Posterior cingulate gyrus (tissue), 11 donors: ENCODE measurements at regions of chr17 and their contacts with region 1.

Region 1: DNA sequence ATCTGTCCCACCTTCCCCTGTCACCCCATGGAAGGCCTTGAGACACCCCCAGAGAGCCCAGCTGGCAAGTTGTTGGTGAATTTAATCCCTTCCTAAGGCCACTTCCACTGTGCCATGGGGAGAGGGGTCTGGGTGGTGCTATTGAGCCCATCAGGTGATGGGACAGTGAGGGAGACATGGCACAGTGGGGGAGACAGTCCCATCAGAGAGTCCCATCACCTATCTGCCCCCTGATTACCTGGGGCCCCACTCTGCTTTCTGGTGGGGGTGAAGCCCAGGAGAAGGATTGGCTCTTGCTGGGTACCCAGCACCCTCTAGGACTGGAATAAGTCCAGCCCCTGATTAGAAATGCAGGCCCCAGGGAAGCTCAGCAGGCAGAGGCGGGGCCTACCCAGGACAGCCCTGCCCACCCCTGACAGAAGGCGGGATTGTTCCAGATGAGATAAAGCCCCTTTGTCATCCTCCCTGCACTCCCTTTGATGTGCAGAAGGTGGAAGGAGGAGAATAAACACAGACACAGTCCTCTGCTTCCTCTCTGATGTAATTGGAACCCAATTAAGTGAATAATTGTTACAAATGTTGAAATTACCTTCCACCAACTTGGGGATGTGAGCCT is 18.9 kb downstream of the TMEM132E start:
- DNase-seq: peak in 8 of 10 donors; percentile 53 to 95 (median 68)

Region 2: DNA sequence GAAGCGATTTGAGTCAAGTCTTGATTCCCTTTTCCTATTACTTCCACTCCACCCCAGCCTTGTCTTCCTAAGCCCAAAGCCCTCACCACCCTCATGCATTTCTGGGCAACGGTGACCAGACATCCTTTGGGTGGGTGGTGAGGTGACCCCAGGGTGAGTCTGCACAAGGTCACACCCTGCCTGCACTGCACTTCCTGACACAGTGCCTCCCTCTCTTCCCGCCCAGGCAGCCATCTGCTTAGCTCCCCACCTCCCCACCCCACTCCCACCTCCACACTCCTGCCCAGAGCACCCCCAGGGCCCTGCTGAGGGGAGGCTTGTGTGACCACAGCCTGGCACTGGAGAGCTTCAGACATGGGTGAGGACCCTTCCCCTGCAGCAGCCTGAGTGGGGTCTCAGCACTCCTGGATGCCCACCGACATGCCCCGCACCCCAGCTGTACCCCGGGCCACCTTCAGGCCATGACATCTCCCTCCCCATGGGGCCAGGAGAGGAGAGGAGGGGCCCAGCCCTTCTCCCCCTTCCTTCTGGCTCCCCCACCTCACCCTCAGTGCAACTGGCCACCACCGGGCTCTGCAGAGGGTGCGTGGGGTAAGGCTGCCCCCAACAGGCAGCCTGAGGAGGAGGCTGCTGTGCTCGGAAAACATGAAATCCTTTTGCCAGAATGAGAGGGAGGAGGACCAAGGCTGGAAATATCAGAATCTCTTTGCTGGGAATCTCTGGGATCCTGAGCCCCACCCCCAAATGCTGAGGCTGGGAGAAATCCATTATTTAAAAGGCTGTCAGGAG is 294.4 kb after region 1 on chr17:
- intact Hi-C with region 1: loop called (anchors 10 kb)
- DNase-seq: peak in 7 of 10 donors; percentile 30 to 89 (median 53)